CD4-positive, alpha-beta memory T cell (primary cell): ENCODE measurements at regions of chr3 and their contacts with region 1.

Region 1: DNA sequence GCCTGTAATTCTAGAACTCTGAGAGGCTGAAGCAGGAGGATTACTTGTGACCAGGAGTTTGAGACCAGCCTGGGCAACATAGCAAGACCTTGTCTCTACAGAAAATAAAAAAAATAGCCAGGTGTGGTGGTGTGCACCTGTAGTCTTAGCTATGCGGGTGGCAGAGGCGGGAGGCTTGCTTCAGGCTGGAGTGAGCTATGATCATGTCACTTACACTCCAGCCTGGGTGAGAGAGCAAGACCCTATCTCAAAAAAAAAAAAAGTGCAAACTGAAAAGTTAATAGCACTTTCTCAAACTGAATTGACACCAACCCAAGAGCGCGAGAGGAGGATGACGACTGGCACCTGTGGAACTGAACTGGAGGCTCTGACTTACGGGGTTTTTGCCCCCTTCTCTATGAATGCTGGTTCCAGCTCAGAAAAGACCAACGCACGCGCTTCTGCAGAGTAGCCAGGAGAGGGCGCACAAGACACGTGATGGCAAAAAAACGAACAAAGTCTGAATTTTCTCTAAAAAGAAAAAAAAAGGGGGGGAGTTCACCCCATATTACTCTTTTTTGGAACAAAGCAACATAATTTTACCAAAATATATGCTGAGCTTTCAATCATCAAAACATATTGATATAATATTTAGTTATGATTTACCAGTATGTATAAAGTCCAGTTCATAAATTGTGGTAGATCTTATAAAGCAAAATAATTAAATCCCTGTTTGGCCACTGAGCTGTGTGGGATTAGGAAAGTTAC is 23.7 kb downstream of the CFAP92 start:
- DNase-seq: peak; percentile 58 to 70 (median 62)
- H3K4me3 ChIP-seq: no peak overlapping the region
- H3K4me3 Mint-ChIP-seq: no peak overlapping the region
- H3K27ac ChIP-seq: no peak overlapping the region
- H3K27ac Mint-ChIP-seq: peak overlapping the region in 1 of 7 donors; percentile 19
- H3K4me1 ChIP-seq: no peaks in the 10 kb centered on the region
- H3K4me1 Mint-ChIP-seq: peaks cover 2 to 6% (median 3%) of the 10 kb centered on the region in 4 donors
- H3K27me3 ChIP-seq: no peaks in the 10 kb centered on the region
- H3K27me3 Mint-ChIP-seq: peaks cover 0 to 2% of the 10 kb centered on the region in 2 donors

Region 2: GRCh38 chr3:128910006-128910405 is 60.2 kb before region 1 on chr3:
- CTCF ChIA-PET with region 1: no interaction called
- POLR2A ChIA-PET with region 1: no interaction called
- intact Hi-C with region 1: no loop called
- DNase-seq: no peak
- H3K4me3 ChIP-seq: no peak overlapping the region
- H3K4me3 Mint-ChIP-seq: no peak overlapping the region
- H3K27ac ChIP-seq: no peak overlapping the region
- H3K27ac Mint-ChIP-seq: no peak overlapping the region
- H3K4me1 ChIP-seq: no peaks in the 10 kb centered on the region
- H3K4me1 Mint-ChIP-seq: no peaks in the 10 kb centered on the region
- H3K27me3 ChIP-seq: no peaks in the 10 kb centered on the region
- H3K27me3 Mint-ChIP-seq: no peaks in the 10 kb centered on the region

Region 3: GRCh38 chr3:128922804-128923459 is 47.2 kb before region 1 on chr3:
- CTCF ChIA-PET with region 1: interaction called, 13 read pairs
- POLR2A ChIA-PET with region 1: no interaction called
- intact Hi-C with region 1: no loop called
- DNase-seq: peak; percentile 55 to 64 (median 57)
- H3K4me3 ChIP-seq: peak overlapping the region; percentile 29 to 74
- H3K4me3 Mint-ChIP-seq: peak overlapping the region; percentile 82 to 90 (median 85)
- H3K27ac ChIP-seq: no peak overlapping the region
- H3K27ac Mint-ChIP-seq: peak overlapping the region; percentile 70 to 91 (median 88)
- H3K4me1 ChIP-seq: peaks cover 20% of the 10 kb centered on the region
- H3K4me1 Mint-ChIP-seq: peaks cover 26 to 45% (median 37%) of the 10 kb centered on the region in 4 donors
- H3K27me3 ChIP-seq: no peaks in the 10 kb centered on the region
- H3K27me3 Mint-ChIP-seq: no peaks in the 10 kb centered on the region

Region 4: GRCh38 chr3:129016356-129016719 is 46.2 kb after region 1 on chr3:
- CTCF ChIA-PET with region 1: interaction called, 191 read pairs
- POLR2A ChIA-PET with region 1: interaction called, 35 read pairs
- intact Hi-C with region 1: loop called (anchors 1 kb)
- DNase-seq: peak; percentile 54 to 74 (median 59)
- H3K4me3 ChIP-seq: peak overlapping the region; percentile 41 to 54
- H3K4me3 Mint-ChIP-seq: peak overlapping the region; percentile 54 to 89 (median 83)
- H3K27ac ChIP-seq: peak overlapping the region; percentile 64
- H3K27ac Mint-ChIP-seq: peak overlapping the region; percentile 85 to 99 (median 94)
- H3K4me1 ChIP-seq: peaks cover 36% of the 10 kb centered on the region
- H3K4me1 Mint-ChIP-seq: peaks cover 32 to 54% (median 44%) of the 10 kb centered on the region in 4 donors
- H3K27me3 ChIP-seq: no peaks in the 10 kb centered on the region
- H3K27me3 Mint-ChIP-seq: no peaks in the 10 kb centered on the region

Region 5: DNA sequence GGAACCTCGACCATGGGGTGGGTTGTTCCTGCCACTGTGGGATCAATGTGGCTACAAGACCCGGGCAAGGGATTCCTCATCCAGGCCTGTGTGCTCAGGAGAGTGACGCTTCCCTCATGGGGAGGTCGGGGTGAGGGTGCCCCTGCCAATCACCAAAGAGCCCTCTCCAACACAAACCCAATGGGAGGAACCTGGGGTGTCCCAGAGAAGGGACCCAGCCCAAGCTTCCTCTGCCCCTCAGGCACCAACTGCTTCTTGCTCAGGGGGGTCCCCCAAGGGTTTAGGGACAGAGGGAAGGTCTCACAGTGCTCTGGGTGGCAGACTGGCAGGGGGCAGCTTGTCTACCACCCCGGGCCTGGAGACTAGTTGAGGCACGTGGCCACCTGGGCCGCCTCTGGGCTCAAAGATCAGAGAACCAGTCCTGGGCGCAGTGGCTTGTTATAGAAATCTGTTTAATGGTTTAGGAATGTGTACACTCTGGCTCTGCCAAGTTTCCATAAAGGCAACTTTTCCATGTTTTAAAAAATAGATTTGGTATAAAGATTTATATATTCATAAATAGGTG is 117.1 kb after region 1 on chr3:
- CTCF ChIA-PET with region 1: interaction called, 13 read pairs
- POLR2A ChIA-PET with region 1: no interaction called
- intact Hi-C with region 1: no loop called
- DNase-seq: no peak
- H3K4me3 ChIP-seq: no peak overlapping the region
- H3K4me3 Mint-ChIP-seq: no peak overlapping the region
- H3K27ac ChIP-seq: no peak overlapping the region
- H3K27ac Mint-ChIP-seq: no peak overlapping the region
- H3K4me1 ChIP-seq: no peaks in the 10 kb centered on the region
- H3K4me1 Mint-ChIP-seq: peaks cover 0 to 5% (median 3%) of the 10 kb centered on the region in 4 donors
- H3K27me3 ChIP-seq: no peaks in the 10 kb centered on the region
- H3K27me3 Mint-ChIP-seq: no peaks in the 10 kb centered on the region

Region 6: GRCh38 chr3:129230311-129231019 is 260.3 kb after region 1 on chr3:
- CTCF ChIA-PET with region 1: interaction called, 16 read pairs
- POLR2A ChIA-PET with region 1: no interaction called
- intact Hi-C with region 1: no loop called
- DNase-seq: no peak
- H3K4me3 ChIP-seq: no peak overlapping the region
- H3K4me3 Mint-ChIP-seq: no peak overlapping the region
- H3K27ac ChIP-seq: no peak overlapping the region
- H3K27ac Mint-ChIP-seq: no peak overlapping the region
- H3K4me1 ChIP-seq: peaks cover 4% of the 10 kb centered on the region
- H3K4me1 Mint-ChIP-seq: peaks cover 8 to 32% (median 14%) of the 10 kb centered on the region in 4 donors
- H3K27me3 ChIP-seq: no peaks in the 10 kb centered on the region
- H3K27me3 Mint-ChIP-seq: peaks cover 0 to 1% of the 10 kb centered on the region in 2 donors

Region 7: DNA sequence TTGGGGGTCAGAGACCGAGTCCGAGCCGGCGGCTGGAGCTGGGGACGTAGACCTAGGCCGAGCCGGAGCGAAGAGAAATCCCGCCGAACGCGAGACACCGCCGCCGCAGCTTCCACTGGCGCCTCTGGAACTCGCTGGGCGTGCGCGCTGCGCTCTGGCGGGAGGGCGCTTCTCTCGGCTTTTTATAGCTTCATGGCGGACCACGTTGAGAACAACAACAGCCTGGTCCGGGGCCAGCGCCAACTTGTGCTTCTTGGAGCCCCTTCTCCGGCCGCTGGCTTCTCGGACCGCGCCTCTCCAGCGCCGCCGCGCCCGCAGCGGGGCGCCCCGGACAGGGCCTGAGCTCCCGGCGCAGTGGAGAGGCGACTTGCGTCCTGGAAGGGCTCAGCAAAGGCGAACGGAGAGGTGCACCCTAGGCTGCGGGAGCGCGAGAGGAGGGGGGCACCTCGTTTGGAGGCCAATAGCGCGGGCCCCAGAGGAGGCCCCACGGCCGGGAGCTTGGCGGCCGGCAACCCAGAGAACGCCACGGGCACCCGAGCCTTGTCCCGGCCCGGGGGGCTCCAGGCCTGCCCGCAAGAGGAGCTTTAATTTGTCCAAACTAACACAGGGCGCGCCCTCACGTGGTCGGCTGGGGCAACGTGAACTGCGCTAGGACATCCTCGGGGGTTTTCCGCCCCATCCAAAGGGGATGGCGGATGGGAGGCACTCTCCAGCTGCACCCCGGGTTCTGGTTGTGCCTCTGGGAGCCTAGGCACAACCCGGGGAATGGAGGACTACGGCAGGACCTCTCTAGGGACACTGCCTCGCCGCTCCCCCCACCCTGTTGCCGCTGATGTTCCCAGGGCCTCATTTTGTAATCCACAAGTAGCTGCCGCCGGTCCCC is 346.2 kb after region 1 on chr3:
- CTCF ChIA-PET with region 1: interaction called, 19 read pairs
- POLR2A ChIA-PET with region 1: interaction called, 11 read pairs
- intact Hi-C with region 1: loop called (anchors 2 kb)
- DNase-seq: peak; percentile 82 to 89 (median 85)
- H3K4me3 ChIP-seq: peak overlapping the region; percentile 81 to 86
- H3K4me3 Mint-ChIP-seq: peak overlapping the region; percentile 79 to 96 (median 89)
- H3K27ac ChIP-seq: peak overlapping the region; percentile 74
- H3K27ac Mint-ChIP-seq: peak overlapping the region; percentile 70 to 92 (median 87)
- H3K4me1 ChIP-seq: peaks cover 37% of the 10 kb centered on the region
- H3K4me1 Mint-ChIP-seq: peaks cover 13 to 30% (median 19%) of the 10 kb centered on the region in 4 donors
- H3K27me3 ChIP-seq: no peaks in the 10 kb centered on the region
- H3K27me3 Mint-ChIP-seq: no peaks in the 10 kb centered on the region

Region 8: GRCh38 chr3:129745253-129745652 is 775.1 kb after region 1 on chr3:
- CTCF ChIA-PET with region 1: no interaction called
- POLR2A ChIA-PET with region 1: no interaction called
- intact Hi-C with region 1: no loop called
- DNase-seq: no peak
- H3K4me3 ChIP-seq: no peak overlapping the region
- H3K4me3 Mint-ChIP-seq: no peak overlapping the region
- H3K27ac ChIP-seq: no peak overlapping the region
- H3K27ac Mint-ChIP-seq: peak overlapping the region in 1 of 7 donors; percentile 53
- H3K4me1 ChIP-seq: peaks cover 14% of the 10 kb centered on the region
- H3K4me1 Mint-ChIP-seq: peaks cover 19 to 22% (median 21%) of the 10 kb centered on the region in 4 donors
- H3K27me3 ChIP-seq: no peaks in the 10 kb centered on the region
- H3K27me3 Mint-ChIP-seq: no peaks in the 10 kb centered on the region

Region 9: DNA sequence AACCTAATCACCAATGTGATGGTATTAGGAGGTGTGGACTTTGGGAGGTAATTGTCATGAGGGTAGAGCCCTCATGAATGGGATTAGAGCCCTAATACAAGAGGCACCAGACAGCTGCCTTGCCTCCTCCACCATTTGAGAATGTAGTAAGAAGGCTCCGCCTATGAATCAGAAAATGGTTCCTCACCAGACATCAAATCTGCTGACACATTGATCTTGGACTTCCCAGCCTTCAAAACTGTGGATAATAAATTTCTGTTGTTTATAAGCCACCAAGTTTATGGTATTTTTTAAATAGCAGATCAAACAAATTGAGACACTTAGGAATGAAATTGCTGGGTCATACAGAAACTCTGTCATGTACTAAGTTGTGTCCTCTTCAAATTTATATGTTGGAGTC is 1318.5 kb after region 1 on chr3:
- CTCF ChIA-PET with region 1: no interaction called
- POLR2A ChIA-PET with region 1: no interaction called
- intact Hi-C with region 1: no loop called
- DNase-seq: no peak
- H3K4me3 ChIP-seq: no peak overlapping the region
- H3K4me3 Mint-ChIP-seq: no peak overlapping the region
- H3K27ac ChIP-seq: no peak overlapping the region
- H3K27ac Mint-ChIP-seq: no peak overlapping the region
- H3K4me1 ChIP-seq: no peaks in the 10 kb centered on the region
- H3K4me1 Mint-ChIP-seq: no peaks in the 10 kb centered on the region
- H3K27me3 ChIP-seq: no peaks in the 10 kb centered on the region
- H3K27me3 Mint-ChIP-seq: peaks cover 8 to 10% of the 10 kb centered on the region in 2 donors